ENCODE measurements at regions of chr11 and their contacts with region 1.

Region 1: GRCh38 chr11:121451986-121452608 is at the start of gene SORL1:
- DNase-seq: peak; percentile 56 to 68 (median 60)
- H3K4me3 ChIP-seq: peak within 1 kb of the TSS; percentile 70 to 98 (median 88)
- H3K4me3 Mint-ChIP-seq: peak within 1 kb of the TSS; percentile 98 to 99
- H3K27ac ChIP-seq: peak within 1 kb of the TSS; percentile 45 to 99
- H3K27ac Mint-ChIP-seq: peak within 1 kb of the TSS; percentile 89 to 97 (median 91)
- H3K4me1 ChIP-seq: peaks cover 90 to 96% of the 10 kb centered on the region in 2 donors
- H3K4me1 Mint-ChIP-seq: peaks cover 93% of the 10 kb centered on the region
- H3K27me3 ChIP-seq: no peaks in the 10 kb centered on the region
- H3K27me3 Mint-ChIP-seq: no peaks in the 10 kb centered on the region
- CTCF ChIP-seq: peak; percentile 52
- polyA plus RNA-seq, gene SORL1: 52.5 to 61.9 (median 59.4) TPM

Region 2: DNA sequence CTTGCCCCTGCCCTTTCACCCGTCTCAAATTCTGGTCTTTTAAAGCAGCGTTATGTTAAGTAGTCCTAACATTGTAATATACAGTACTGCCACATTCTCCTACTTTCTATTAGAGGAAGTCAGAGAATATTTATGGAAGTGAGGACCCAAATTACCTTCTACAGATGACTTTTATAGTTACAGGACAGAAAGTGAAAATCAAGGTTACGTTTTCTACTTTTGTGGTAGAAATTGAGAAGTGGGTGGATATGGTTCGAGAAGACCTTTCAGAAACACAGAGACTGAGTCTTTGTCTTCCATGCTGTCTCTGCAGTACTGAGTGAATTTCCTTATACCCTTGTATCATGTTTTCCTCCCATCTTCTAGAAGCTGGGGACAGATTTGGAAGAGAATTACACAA is 142.4 kb before region 1 on chr11:
- intact Hi-C with region 1: no loop called
- DNase-seq: no peak
- H3K4me3 ChIP-seq: no peak overlapping the region
- H3K4me3 Mint-ChIP-seq: no peak overlapping the region
- H3K27ac ChIP-seq: no peak overlapping the region
- H3K27ac Mint-ChIP-seq: peak overlapping the region in 1 of 7 donors; percentile 5
- H3K4me1 ChIP-seq: no peaks in the 10 kb centered on the region
- H3K4me1 Mint-ChIP-seq: peaks cover 6% of the 10 kb centered on the region
- H3K27me3 ChIP-seq: no peaks in the 10 kb centered on the region
- H3K27me3 Mint-ChIP-seq: no peaks in the 10 kb centered on the region
- CTCF ChIP-seq: no peak

Region 3: GRCh38 chr11:121417055-121417551 is 35.0 kb before region 1 on chr11:
- intact Hi-C with region 1: loop called (anchors 2 to 5 kb)
- DNase-seq: peak; percentile 92 to 98 (median 93)
- H3K4me3 ChIP-seq: peak overlapping the region in 1 of 3 experiments; percentile 49
- H3K4me3 Mint-ChIP-seq: peak overlapping the region; percentile 41 to 71
- H3K27ac ChIP-seq: peak overlapping the region; percentile 86 to 90
- H3K27ac Mint-ChIP-seq: peak overlapping the region; percentile 96 to 99 (median 97)
- H3K4me1 ChIP-seq: peaks cover 70 to 74% of the 10 kb centered on the region in 2 donors
- H3K4me1 Mint-ChIP-seq: peaks cover 85% of the 10 kb centered on the region
- H3K27me3 ChIP-seq: no peaks in the 10 kb centered on the region
- H3K27me3 Mint-ChIP-seq: peaks cover 0 to 6% (median 0%) of the 10 kb centered on the region in 3 donors
- CTCF ChIP-seq: no peak

Region 4: GRCh38 chr11:121464352-121464946 is 12.4 kb after region 1 on chr11:
- intact Hi-C with region 1: loop called in 1 of 2 experiments (anchors 2 kb)
- DNase-seq: peak; percentile 61 to 84 (median 80)
- H3K4me3 ChIP-seq: peak overlapping the region in 1 of 3 experiments; percentile 10
- H3K4me3 Mint-ChIP-seq: peak overlapping the region; percentile 60 to 71
- H3K27ac ChIP-seq: peak overlapping the region; percentile 0 to 79
- H3K27ac Mint-ChIP-seq: peak overlapping the region; percentile 65 to 93 (median 79)
- H3K4me1 ChIP-seq: peaks cover 52 to 76% of the 10 kb centered on the region in 2 donors
- H3K4me1 Mint-ChIP-seq: peaks cover 92% of the 10 kb centered on the region
- H3K27me3 ChIP-seq: no peaks in the 10 kb centered on the region
- H3K27me3 Mint-ChIP-seq: no peaks in the 10 kb centered on the region
- CTCF ChIP-seq: no peak

Region 5: DNA sequence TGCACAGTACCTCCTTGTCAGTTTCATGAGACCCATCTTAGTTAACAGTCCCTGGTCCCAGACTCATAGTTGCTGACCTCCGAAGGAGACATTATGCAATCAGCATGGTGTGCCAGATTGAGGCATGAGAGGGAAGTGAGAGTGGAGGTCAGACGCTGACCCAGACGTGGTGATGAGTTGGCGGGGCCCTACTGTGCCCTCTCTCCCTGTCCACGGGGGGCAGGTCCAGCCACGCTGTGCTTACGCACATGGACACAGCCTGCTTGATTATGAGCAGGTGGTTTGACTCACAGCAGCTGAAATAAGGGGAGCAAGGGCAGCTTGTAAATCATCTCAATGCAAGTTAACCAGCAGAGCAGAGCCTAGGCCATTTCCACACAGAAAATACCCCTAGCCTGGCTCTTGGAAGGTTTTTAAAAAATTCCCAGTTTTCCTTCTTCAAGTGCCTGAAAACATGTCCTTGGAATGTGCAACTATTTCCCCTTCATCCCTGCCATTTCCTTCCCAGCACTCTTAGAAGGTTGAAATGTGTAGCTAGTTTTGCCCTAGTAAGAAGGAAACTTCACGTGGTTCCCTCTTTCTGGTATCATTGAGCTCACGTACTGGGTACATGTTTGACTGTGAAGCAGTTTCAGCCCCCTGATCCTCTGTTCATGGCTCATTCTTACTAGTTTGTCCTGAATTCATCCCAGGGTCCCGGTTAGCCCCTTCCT is 123.3 kb after region 1 on chr11:
- intact Hi-C with region 1: loop called in 1 of 2 experiments (anchors 5 kb)
- DNase-seq: peak; percentile 97 to 99 (median 99)
- H3K4me3 ChIP-seq: no peak overlapping the region
- H3K4me3 Mint-ChIP-seq: peak overlapping the region in 1 of 2 donors; percentile 48
- H3K27ac ChIP-seq: peak overlapping the region; percentile 7 to 76
- H3K27ac Mint-ChIP-seq: peak overlapping the region; percentile 81 to 96 (median 86)
- H3K4me1 ChIP-seq: peaks cover 47 to 52% of the 10 kb centered on the region in 2 donors
- H3K4me1 Mint-ChIP-seq: peaks cover 66% of the 10 kb centered on the region
- H3K27me3 ChIP-seq: no peaks in the 10 kb centered on the region
- H3K27me3 Mint-ChIP-seq: peaks cover 0 to 2% (median 0%) of the 10 kb centered on the region in 3 donors
- CTCF ChIP-seq: no peak

Region 6: GRCh38 chr11:121800731-121801393 is 348.8 kb after region 1 on chr11:
- intact Hi-C with region 1: no loop called
- DNase-seq: no peak
- H3K4me3 ChIP-seq: no peak overlapping the region
- H3K4me3 Mint-ChIP-seq: no peak overlapping the region
- H3K27ac ChIP-seq: no peak overlapping the region
- H3K27ac Mint-ChIP-seq: peak overlapping the region in 1 of 7 donors; percentile 21
- H3K4me1 ChIP-seq: no peaks in the 10 kb centered on the region
- H3K4me1 Mint-ChIP-seq: no peaks in the 10 kb centered on the region
- H3K27me3 ChIP-seq: no peaks in the 10 kb centered on the region
- H3K27me3 Mint-ChIP-seq: peaks cover 0 to 4% (median 4%) of the 10 kb centered on the region in 3 donors
- CTCF ChIP-seq: no peak